Activated naive CD4-positive, alpha-beta T cell treated with anti-CD3 and anti-CD28 coated beads, Interleukin-2, amount 10 ng/mL, durations not matched to agents 7 days and 5 days (primary cell): ENCODE measurements at regions of chr17 and their contacts with region 1.

Region 1: GRCh38 chr17:42120770-42121769 is at the start of gene KAT2A:
- DNase-seq: peak; percentile 83
- H3K4me3 Mint-ChIP-seq: peak within 1 kb of the TSS; percentile 68
- H3K27ac Mint-ChIP-seq: peak within 1 kb of the TSS; percentile 55
- H3K4me1 Mint-ChIP-seq: peaks cover 38% of the 10 kb centered on the region
- H3K27me3 Mint-ChIP-seq: no peaks in the 10 kb centered on the region

Region 2: GRCh38 chr17:42019509-42020404 is 101.3 kb before region 1 on chr17 and contains the start of gene NKIRAS2:
- CTCF ChIA-PET with region 1: interaction called, 222 read pairs
- DNase-seq: peak; percentile 97
- H3K4me3 Mint-ChIP-seq: peak within 1 kb of the TSS; percentile 88
- H3K27ac Mint-ChIP-seq: peak within 1 kb of the TSS; percentile 51
- H3K4me1 Mint-ChIP-seq: peaks cover 58% of the 10 kb centered on the region
- H3K27me3 Mint-ChIP-seq: no peaks in the 10 kb centered on the region

Region 3: DNA sequence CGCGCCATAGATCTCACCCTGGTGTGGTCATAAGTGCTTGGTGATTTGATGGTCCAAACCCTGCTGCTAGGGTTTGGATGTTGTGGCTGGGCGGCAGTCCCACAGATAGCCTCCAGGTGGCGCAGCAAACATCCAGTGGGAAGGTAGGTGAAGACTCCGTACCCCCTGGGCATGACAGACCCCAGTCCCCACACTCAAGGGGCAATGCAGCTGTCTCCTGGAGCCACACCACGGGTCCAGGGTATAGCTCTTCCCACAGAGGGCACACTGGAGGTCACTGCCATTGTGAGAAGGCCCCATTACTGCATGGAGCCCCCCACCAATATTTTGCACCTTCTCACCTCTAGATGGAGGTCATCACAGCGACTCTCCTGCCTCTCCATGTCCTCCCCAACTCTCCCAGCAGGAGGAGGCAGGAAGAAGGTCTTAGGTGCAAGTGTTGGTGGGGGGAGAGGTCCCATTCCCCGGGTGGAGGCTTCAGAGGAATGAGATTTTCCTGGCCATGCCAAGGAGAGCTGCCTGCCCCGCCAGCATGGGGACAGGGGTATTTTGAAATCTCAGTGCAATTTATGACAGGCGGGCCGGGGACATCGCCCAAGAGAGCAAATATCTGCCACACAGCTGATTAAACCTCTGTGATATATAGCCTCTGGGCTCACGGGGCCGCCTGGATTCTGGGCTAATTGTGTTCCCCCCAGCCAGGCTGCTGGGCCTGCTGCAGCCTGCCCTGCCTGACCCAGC is 53.5 kb before region 1 on chr17:
- CTCF ChIA-PET with region 1: interaction called, 48 read pairs
- DNase-seq: peak; percentile 83
- H3K4me3 Mint-ChIP-seq: no peak overlapping the region
- H3K27ac Mint-ChIP-seq: no peak overlapping the region
- H3K4me1 Mint-ChIP-seq: peaks cover 36% of the 10 kb centered on the region
- H3K27me3 Mint-ChIP-seq: peaks cover 60% of the 10 kb centered on the region

Region 4: GRCh38 chr17:42131981-42132432 is 10.9 kb after region 1 on chr17:
- CTCF ChIA-PET with region 1: interaction called, 10 read pairs
- DNase-seq: no peak
- H3K4me3 Mint-ChIP-seq: no peak overlapping the region
- H3K27ac Mint-ChIP-seq: peak overlapping the region; percentile 82
- H3K4me1 Mint-ChIP-seq: peaks cover 55% of the 10 kb centered on the region
- H3K27me3 Mint-ChIP-seq: no peaks in the 10 kb centered on the region

Region 5: GRCh38 chr17:42142371-42142896 is 21.4 kb after region 1 on chr17:
- CTCF ChIA-PET with region 1: no interaction called
- DNase-seq: no peak
- H3K4me3 Mint-ChIP-seq: no peak overlapping the region
- H3K27ac Mint-ChIP-seq: peak overlapping the region; percentile 75
- H3K4me1 Mint-ChIP-seq: peaks cover 11% of the 10 kb centered on the region
- H3K27me3 Mint-ChIP-seq: no peaks in the 10 kb centered on the region

Region 6: DNA sequence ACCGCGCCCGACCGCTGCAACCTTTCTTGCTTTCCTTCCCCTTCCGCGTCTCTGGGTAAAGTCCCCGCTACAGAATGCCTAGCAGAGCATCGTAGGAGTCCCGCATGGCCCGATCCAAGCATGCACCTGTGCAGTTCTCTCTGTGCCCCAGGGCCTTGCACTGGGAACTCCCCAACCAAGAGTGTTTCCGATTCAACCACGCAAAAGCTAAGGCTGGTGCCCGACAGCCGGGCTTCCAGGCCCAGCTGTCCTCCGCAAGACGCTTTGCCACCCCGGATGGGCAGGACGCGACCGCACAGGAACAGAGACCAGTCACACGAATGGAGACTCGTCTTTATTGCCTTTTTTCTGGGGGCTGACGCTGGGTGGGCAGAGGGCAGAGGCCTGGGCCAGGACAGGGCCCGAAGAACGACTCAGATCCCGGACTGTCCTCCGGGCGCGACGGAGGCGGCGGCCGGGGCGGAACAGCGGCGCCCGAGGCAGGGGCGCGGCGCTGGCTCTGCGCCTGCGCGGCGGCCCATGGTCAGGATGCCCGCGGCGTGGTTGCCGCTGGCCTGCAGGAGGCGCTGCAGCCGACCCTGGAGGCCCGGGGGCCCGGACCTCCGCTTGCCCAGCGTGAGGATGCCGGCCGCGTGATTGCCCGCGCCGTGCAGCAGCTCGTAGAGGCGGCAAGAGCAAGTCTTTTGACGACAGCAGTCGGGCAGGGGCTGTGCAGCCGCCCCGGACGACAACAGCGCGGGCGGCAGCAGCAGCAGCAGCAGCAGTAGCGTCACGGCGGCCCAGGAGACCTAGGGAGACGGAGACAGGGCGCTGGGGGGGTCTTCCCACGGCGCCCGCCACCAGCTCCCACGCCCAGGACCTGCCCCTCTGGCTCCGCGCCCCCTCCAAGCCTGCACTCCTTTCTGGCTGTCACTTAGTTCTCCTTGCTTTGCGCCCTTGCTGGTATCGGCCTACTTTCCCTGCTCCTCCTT is 63.0 kb after region 1 on chr17:
- CTCF ChIA-PET with region 1: interaction called, 28 read pairs
- DNase-seq: peak; percentile 80
- H3K4me3 Mint-ChIP-seq: peak overlapping the region; percentile 82
- H3K27ac Mint-ChIP-seq: peak overlapping the region; percentile 86
- H3K4me1 Mint-ChIP-seq: peaks cover 60% of the 10 kb centered on the region
- H3K27me3 Mint-ChIP-seq: peaks cover 67% of the 10 kb centered on the region